ENCODE measurements at regions of chr2 and their contacts with region 1.

Region 1: DNA sequence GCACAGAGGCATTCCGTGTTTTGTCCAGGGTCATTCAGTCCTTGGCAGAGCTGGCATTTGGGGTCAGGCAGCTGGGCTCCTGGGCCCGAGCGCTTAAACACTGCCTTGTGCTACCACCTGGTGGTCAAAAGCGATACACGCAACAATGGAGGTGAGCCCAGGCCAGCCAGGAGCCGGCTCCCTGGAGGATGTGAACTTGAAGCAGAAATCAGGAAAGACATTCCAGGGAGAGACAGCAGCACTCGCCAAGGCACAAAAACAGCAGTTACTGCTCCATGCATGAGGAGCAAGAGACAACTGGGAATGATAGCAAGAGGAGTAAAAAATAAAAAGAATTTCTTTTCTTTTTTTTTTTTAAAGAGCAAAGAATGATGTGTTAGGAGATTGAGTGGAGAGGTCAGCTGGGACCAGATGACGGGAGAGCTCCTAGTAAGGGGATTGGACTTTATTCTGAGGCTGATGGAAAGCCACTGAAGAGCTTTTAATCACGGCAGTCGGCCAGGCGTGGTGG is 20.7 kb downstream of the SCYGR8 start:
- DNase-seq: no peak
- ATAC-seq: peak; percentile 100
- H3K4me3 ChIP-seq: no peak overlapping the region
- H3K27ac ChIP-seq: no peak overlapping the region
- H3K4me1 ChIP-seq: no peaks in the 10 kb centered on the region
- H3K27me3 ChIP-seq: no peaks in the 10 kb centered on the region
- CTCF ChIP-seq: peak; percentile 84 to 91 (median 84)
- EP300 ChIP-seq: no peak
- POLR2A ChIP-seq: no peak
- RAD21 ChIP-seq: peak; percentile 93

Region 2: DNA sequence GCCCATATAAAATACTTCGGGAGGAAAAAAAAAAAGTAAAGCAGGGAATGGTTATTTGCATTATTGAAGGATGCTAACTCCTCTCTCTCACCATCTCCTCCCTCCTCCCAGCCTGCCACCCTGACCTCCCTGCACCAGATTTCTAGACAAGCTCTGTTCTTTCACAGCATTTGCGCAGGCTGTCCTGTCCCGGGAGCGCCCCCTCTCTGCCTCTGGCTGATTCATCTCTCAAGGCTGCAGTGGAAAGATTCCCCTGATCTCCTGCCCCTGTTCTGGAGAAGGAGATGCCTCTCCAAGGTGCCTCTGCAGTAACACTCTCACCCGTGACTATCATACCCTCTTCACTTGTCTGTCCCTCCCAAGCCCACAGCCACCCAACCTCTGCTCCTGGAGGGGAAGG is 640.9 kb before region 1 on chr2:
- CTCF ChIA-PET with region 1: interaction called, 9 read pairs
- POLR2A ChIA-PET with region 1: no interaction called
- RAD21 ChIA-PET with region 1: interaction called, 5 read pairs
- SMC1A ChIA-PET with region 1: interaction called, 4 read pairs
- in situ Hi-C with region 1: loop called (anchors 10 kb)
- intact Hi-C with region 1: loop called (anchors 1 kb)
- DNase-seq: no peak
- ATAC-seq: no peak
- H3K4me3 ChIP-seq: no peak overlapping the region
- H3K27ac ChIP-seq: no peak overlapping the region
- H3K4me1 ChIP-seq: no peaks in the 10 kb centered on the region
- H3K27me3 ChIP-seq: no peaks in the 10 kb centered on the region
- CTCF ChIP-seq: peak in 2 of 3 experiments; percentile 5 to 9; a peak in 1 of 6 replicates
- EP300 ChIP-seq: no peak
- POLR2A ChIP-seq: no peak
- RAD21 ChIP-seq: peak; percentile 21; the same call in 1 of the 2 replicates

Region 3: DNA sequence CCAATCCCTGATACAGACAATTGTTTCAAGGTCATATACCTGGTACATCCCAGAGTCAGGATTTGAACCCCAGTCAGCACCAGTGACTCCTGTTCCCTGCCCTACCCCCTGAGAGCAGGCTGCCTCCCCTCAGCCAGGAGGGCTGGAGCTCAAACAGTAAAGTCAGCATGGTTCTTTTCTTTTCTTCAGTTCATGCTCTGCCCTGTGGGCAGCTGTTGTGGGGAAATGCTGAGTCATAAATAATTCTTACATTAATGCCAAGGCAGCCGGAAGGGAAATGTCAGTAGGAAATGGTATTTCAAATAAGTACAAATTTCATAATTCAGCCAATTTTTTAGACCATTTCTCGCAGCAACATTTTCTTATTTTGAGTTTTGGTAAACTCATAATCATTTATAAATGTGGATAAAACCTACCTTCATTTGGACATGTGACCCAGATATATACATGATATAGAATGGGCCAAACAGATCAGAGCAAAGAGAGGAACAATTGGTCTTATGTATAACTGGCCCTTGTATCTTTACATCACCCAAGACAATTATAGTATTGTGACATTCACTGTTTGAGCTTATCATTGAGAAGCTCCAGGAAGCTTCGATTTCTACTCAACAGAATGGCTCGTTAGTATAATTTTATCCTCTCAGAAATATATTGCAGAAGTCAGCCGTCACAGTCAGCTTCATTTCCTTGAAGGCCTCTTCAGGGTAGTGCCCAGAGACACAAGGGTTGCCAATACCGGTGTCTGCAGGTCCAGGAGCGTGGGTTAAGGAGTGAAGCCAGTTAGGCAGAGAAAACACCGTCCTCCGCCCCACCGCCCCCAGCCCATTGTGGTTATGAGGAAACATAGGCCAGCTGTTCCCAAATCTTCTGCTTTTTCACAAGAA is 350.6 kb before region 1 on chr2:
- CTCF ChIA-PET with region 1: interaction called, 4 read pairs
- POLR2A ChIA-PET with region 1: no interaction called
- RAD21 ChIA-PET with region 1: interaction called, 12 read pairs
- SMC1A ChIA-PET with region 1: interaction called, 14 read pairs
- in situ Hi-C with region 1: no loop called
- intact Hi-C with region 1: no loop called
- DNase-seq: no peak
- ATAC-seq: peak; percentile 45
- H3K4me3 ChIP-seq: no peak overlapping the region
- H3K27ac ChIP-seq: no peak overlapping the region; the same call in 1 of the 2 replicates
- H3K4me1 ChIP-seq: peaks cover 31% of the 10 kb centered on the region
- H3K27me3 ChIP-seq: no peaks in the 10 kb centered on the region
- CTCF ChIP-seq: no peak
- EP300 ChIP-seq: no peak
- POLR2A ChIP-seq: no peak
- RAD21 ChIP-seq: no peak

Region 4: DNA sequence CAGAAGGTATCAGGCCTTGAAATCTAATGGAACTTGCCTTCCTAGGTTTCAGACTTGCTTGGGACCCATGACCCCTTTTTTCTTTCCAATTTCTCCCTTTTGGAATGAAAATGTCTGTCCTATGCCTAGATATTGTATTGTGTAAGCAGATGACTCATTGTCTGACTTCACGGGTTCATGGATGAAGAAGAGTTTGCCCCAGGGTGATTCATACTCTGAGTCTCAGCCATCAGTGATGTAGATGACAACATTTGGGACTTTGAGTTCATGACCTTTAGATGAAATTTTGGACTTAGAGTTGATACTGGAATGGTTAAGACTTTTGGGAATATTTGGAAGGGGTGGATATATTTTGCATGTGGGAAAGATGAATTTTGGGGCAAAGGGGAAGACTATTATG is 111.0 kb before region 1 on chr2:
- CTCF ChIA-PET with region 1: interaction called, 134 read pairs
- POLR2A ChIA-PET with region 1: no interaction called
- RAD21 ChIA-PET with region 1: interaction called, 56 read pairs
- SMC1A ChIA-PET with region 1: interaction called, 56 read pairs
- in situ Hi-C with region 1: loop called (anchors 5 kb)
- intact Hi-C with region 1: loop called (anchors 1 kb)
- DNase-seq: no peak
- ATAC-seq: peak; percentile 53
- H3K4me3 ChIP-seq: no peak overlapping the region
- H3K27ac ChIP-seq: no peak overlapping the region
- H3K4me1 ChIP-seq: no peaks in the 10 kb centered on the region
- H3K27me3 ChIP-seq: no peaks in the 10 kb centered on the region
- CTCF ChIP-seq: no peak
- EP300 ChIP-seq: no peak
- POLR2A ChIP-seq: no peak
- RAD21 ChIP-seq: no peak

Region 5: GRCh38 chr2:227748079-227748478 is 18.3 kb before region 1 on chr2:
- CTCF ChIA-PET with region 1: interaction called, 14 read pairs
- POLR2A ChIA-PET with region 1: no interaction called
- RAD21 ChIA-PET with region 1: no interaction called
- SMC1A ChIA-PET with region 1: interaction called, 3 read pairs
- in situ Hi-C with region 1: no loop called
- intact Hi-C with region 1: no loop called
- DNase-seq: no peak
- ATAC-seq: peak; percentile 75
- H3K4me3 ChIP-seq: no peak overlapping the region
- H3K27ac ChIP-seq: no peak overlapping the region
- H3K4me1 ChIP-seq: no peaks in the 10 kb centered on the region
- H3K27me3 ChIP-seq: no peaks in the 10 kb centered on the region
- CTCF ChIP-seq: peak; percentile 31 to 53 (median 42); a peak in 5 of 6 replicates
- EP300 ChIP-seq: no peak
- POLR2A ChIP-seq: no peak
- RAD21 ChIP-seq: peak; percentile 33; the same call in 1 of the 2 replicates

Region 6: DNA sequence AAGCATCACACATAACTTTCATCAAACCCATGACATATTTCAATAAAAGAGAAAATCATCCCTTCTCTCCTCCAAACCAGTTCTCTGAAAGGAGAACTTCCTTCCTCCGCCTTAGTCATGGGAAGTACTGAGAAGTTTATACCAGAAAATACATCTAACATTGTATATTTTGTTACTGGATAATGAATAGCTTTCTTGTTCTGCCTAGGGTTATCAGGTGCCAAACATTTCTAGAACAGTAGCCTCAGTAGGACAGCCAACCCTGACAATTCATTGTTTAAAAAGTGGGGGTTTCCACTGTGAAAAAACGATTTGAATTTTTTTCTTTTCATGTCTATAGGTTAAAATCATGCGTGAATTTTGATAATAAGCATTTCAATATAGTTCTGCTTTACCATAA is 89.0 kb after region 1 on chr2:
- CTCF ChIA-PET with region 1: interaction called, 387 read pairs
- POLR2A ChIA-PET with region 1: interaction called, 3 read pairs
- RAD21 ChIA-PET with region 1: interaction called, 60 read pairs
- SMC1A ChIA-PET with region 1: interaction called, 133 read pairs
- in situ Hi-C with region 1: no loop called
- intact Hi-C with region 1: no loop called
- DNase-seq: no peak
- ATAC-seq: peak; percentile 76
- H3K4me3 ChIP-seq: no peak overlapping the region
- H3K27ac ChIP-seq: no peak overlapping the region
- H3K4me1 ChIP-seq: no peaks in the 10 kb centered on the region
- H3K27me3 ChIP-seq: no peaks in the 10 kb centered on the region
- CTCF ChIP-seq: no peak
- EP300 ChIP-seq: no peak
- POLR2A ChIP-seq: no peak
- RAD21 ChIP-seq: no peak

Measured in GM12878 (cell line).